Right lobe of liver (tissue), 6 donors: ENCODE measurements at regions of chr9 and their contacts with region 1.

Region 1: GRCh38 chr9:134217832-134218629 is 53.7 kb upstream of the RNU6ATAC start:
- DNase-seq: peak; percentile 42 to 81 (median 65)
- ATAC-seq: peak; percentile 8 to 31 (median 28)
- H3K4me3 ChIP-seq: peak overlapping the region in 2 of 3 donors; percentile 5 to 48
- H3K27ac ChIP-seq: peak overlapping the region; percentile 93 to 100 (median 100)
- H3K4me1 ChIP-seq: peaks cover 2 to 81% (median 33%) of the 10 kb centered on the region in 4 donors
- H3K27me3 ChIP-seq: no peaks in the 10 kb centered on the region
- CTCF ChIP-seq: peak; percentile 46 to 64 (median 52)
- POLR2A ChIP-seq: no peak

Region 2: GRCh38 chr9:133992780-133993634 is 225.0 kb before region 1 on chr9:
- intact Hi-C with region 1: no loop called
- DNase-seq: peak; percentile 90 to 94 (median 92)
- ATAC-seq: peak; percentile 68 to 78 (median 72)
- H3K4me3 ChIP-seq: peak overlapping the region; percentile 66 to 75 (median 72)
- H3K27ac ChIP-seq: peak overlapping the region; percentile 86 to 95 (median 89)
- H3K4me1 ChIP-seq: peaks cover 0 to 24% (median 11%) of the 10 kb centered on the region in 4 donors
- H3K27me3 ChIP-seq: no peaks in the 10 kb centered on the region
- CTCF ChIP-seq: peak; percentile 10 to 55 (median 35)
- POLR2A ChIP-seq: peak; percentile 87

Region 3: DNA sequence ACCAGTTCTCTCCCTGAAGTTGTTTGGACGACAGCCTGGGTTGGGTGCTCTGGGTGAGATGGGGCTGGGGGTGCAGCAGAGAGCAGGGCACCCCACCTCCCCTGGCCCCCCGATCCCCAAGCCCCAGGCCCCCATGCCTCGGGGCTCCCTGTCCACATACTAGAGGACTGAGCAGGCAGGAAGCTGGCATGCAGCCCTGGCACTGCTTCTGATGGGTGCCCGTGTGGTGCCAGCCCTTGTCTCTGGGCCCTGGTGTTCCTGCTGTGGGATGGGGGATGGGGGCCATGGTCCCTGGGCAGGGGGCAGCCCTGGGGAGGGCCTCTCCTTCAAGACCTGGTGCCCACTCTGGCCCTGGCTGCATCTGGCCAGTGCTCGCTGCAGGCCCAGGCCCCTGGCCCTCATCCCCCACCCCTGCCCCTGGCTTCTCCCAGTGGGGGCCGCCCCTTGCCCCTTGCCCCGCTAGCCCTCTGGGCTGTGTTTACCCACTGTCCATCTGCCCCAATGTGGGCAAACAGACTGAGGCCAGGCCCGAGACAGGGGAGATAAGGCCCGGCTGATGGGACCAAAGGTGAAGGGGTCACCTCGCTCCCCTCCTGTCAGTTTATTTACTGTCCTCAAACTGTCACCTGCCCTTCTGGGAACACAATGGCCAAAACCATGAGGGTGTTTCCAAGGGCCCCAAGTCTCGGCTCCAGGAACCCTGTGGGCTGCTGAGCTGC is 41.0 kb after region 1 on chr9:
- intact Hi-C with region 1: loop called in 1 of 2 experiments (anchors 2 kb)
- DNase-seq: peak; percentile 90 to 98 (median 97)
- ATAC-seq: peak; percentile 83 to 90 (median 88)
- H3K4me3 ChIP-seq: no peak overlapping the region
- H3K27ac ChIP-seq: peak overlapping the region; percentile 73 to 96 (median 96)
- H3K4me1 ChIP-seq: peaks cover 0 to 47% (median 22%) of the 10 kb centered on the region in 4 donors
- H3K27me3 ChIP-seq: no peaks in the 10 kb centered on the region
- CTCF ChIP-seq: no peak
- POLR2A ChIP-seq: no peak